PC-3 (cell line): ENCODE measurements at regions of chr6 and their contacts with region 1.

Region 1: GRCh38 chr6:109705258-109705657 is 14.2 kb downstream of the FIG4 start:
- DNase-seq: peak; percentile 89
- ATAC-seq: peak; percentile 88
- H3K4me3 ChIP-seq: no peak overlapping the region
- H3K27ac ChIP-seq: no peak overlapping the region
- H3K4me1 ChIP-seq: no peaks in the 10 kb centered on the region
- H3K27me3 ChIP-seq: no peaks in the 10 kb centered on the region
- CTCF ChIP-seq: peak; percentile 94

Region 2: DNA sequence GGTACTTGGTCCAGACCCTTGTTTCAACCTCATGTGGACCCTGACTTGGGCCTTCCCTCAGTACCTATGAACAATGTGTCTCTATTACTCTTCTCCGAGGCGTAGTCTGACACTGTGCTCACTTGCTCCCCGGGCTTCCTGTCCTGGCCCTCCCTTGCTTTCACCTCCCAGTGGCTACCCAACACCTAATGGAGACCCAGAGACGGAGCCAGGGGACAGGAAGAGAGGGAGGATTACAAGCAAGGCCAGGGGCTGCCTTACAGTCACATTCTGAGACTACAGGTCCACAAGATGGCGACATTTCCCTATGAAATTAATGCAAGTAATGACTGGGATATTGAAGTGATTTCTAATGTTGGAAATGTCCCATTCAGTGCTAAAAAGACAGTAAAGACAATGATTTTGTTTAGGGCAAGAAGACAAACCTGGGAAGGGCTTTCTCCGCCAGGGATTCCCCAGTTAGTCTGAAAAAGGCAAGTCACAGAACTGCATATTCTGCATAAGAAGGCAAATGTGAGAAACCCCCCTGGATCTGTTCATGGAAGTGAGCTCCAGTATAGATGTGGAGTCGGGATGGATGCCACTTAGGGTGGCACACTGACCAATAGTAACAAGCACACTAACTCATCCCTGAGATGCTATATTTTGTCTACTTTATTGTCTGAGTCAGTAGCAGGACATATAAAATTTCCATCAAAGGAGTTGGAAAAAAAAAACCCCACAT is 178.2 kb before region 1 on chr6:
- CTCF ChIA-PET with region 1: interaction called, 5 read pairs
- POLR2A ChIA-PET with region 1: no interaction called
- intact Hi-C with region 1: loop called (anchors 1 kb)
- DNase-seq: peak; percentile 78
- ATAC-seq: peak; percentile 92
- H3K4me3 ChIP-seq: no peak overlapping the region
- H3K27ac ChIP-seq: no peak overlapping the region
- H3K4me1 ChIP-seq: peaks cover 4% of the 10 kb centered on the region; the same call in 1 of the 2 replicates
- H3K27me3 ChIP-seq: no peaks in the 10 kb centered on the region
- CTCF ChIP-seq: peak; percentile 76

Region 3: GRCh38 chr6:109579361-109579760 is 125.9 kb before region 1 on chr6:
- CTCF ChIA-PET with region 1: no interaction called
- POLR2A ChIA-PET with region 1: no interaction called
- intact Hi-C with region 1: no loop called
- DNase-seq: peak; percentile 22
- ATAC-seq: no peak
- H3K4me3 ChIP-seq: no peak overlapping the region
- H3K27ac ChIP-seq: no peak overlapping the region
- H3K4me1 ChIP-seq: no peaks in the 10 kb centered on the region
- H3K27me3 ChIP-seq: no peaks in the 10 kb centered on the region
- CTCF ChIP-seq: no peak

Region 4: GRCh38 chr6:109892436-109893435 is 187.5 kb after region 1 on chr6:
- CTCF ChIA-PET with region 1: no interaction called
- POLR2A ChIA-PET with region 1: no interaction called
- intact Hi-C with region 1: loop called (anchors 2 kb)
- DNase-seq: peak; percentile 92
- ATAC-seq: peak; percentile 78
- H3K4me3 ChIP-seq: peak overlapping the region; percentile 58
- H3K27ac ChIP-seq: peak overlapping the region; percentile 68
- H3K4me1 ChIP-seq: peaks cover 19% of the 10 kb centered on the region
- H3K27me3 ChIP-seq: no peaks in the 10 kb centered on the region
- CTCF ChIP-seq: peak; percentile 46

Region 5: GRCh38 chr6:110053395-110054240 is 348.4 kb after region 1 on chr6:
- CTCF ChIA-PET with region 1: no interaction called
- POLR2A ChIA-PET with region 1: no interaction called
- intact Hi-C with region 1: loop called (anchors 1 kb)
- DNase-seq: peak; percentile 46
- ATAC-seq: peak; percentile 79
- H3K4me3 ChIP-seq: no peak overlapping the region
- H3K27ac ChIP-seq: no peak overlapping the region
- H3K4me1 ChIP-seq: no peaks in the 10 kb centered on the region
- H3K27me3 ChIP-seq: peaks cover 16% of the 10 kb centered on the region; the same call in 1 of the 2 replicates
- CTCF ChIP-seq: peak; percentile 76

Region 6: DNA sequence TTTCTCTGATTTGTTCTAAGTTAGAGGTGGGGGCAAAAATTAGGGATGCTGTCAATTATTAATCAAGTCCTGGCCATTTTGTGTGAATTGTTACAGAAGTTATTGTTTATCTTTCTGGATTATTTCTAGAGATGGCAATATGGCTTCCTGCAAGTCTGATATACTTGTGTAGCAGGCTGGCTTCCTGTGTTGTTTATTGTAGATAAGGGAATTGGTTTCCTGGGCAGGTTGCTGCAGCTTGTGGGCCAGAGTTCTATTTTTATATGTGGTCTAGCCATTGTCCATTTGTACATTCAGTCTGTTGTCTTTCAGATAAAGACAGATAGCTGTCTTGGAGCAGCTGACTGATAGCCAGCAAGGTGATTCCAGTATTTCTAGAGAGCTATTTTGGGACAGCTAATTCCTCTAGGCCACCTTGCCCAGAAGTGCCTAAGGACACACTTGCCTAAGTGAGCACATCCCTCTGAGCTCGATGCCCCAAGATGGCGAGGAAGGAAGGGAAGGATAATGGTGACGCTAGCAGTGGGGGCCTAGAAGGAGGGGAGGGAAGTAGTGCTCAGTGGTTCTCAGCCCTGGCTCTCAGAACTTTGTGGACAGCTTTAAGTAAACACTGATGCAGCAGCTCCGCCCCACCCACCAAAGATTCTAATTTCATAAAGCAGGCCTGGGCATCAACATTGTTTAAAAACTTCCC is 684.6 kb after region 1 on chr6:
- CTCF ChIA-PET with region 1: no interaction called
- POLR2A ChIA-PET with region 1: no interaction called
- intact Hi-C with region 1: loop called (anchors 1 kb)
- DNase-seq: no peak
- ATAC-seq: peak; percentile 29; the same call in 1 of the 2 replicates
- H3K4me3 ChIP-seq: no peak overlapping the region
- H3K27ac ChIP-seq: no peak overlapping the region
- H3K4me1 ChIP-seq: no peaks in the 10 kb centered on the region
- H3K27me3 ChIP-seq: no peaks in the 10 kb centered on the region
- CTCF ChIP-seq: no peak